Activated CD8-positive, alpha-beta T cell treated with anti-CD3 and anti-CD28 coated beads for 36 hours (primary cell): ENCODE measurements at regions of chr11 and their contacts with region 1.

Region 1: GRCh38 chr11:4187055-4187988 is 92.7 kb downstream of the RRM1 start:
- DNase-seq: peak; percentile 89
- ATAC-seq: peak; percentile 94
- H3K4me3 Mint-ChIP-seq: peak overlapping the region; percentile 66
- H3K27ac Mint-ChIP-seq: no peak overlapping the region
- H3K4me1 Mint-ChIP-seq: peaks cover 4% of the 10 kb centered on the region
- H3K27me3 Mint-ChIP-seq: peaks cover 2% of the 10 kb centered on the region
- CTCF ChIP-seq: peak; percentile 88

Region 2: GRCh38 chr11:4211991-4212390 is 24.7 kb after region 1 on chr11:
- CTCF ChIA-PET with region 1: interaction called, 17 read pairs
- POLR2A ChIA-PET with region 1: no interaction called
- intact Hi-C with region 1: no loop called
- DNase-seq: no peak
- ATAC-seq: no peak
- H3K4me3 Mint-ChIP-seq: no peak overlapping the region
- H3K27ac Mint-ChIP-seq: no peak overlapping the region
- H3K4me1 Mint-ChIP-seq: no peaks in the 10 kb centered on the region
- H3K27me3 Mint-ChIP-seq: peaks cover 20% of the 10 kb centered on the region
- CTCF ChIP-seq: no peak

Region 3: GRCh38 chr11:4496557-4497275 is 309.4 kb after region 1 on chr11:
- CTCF ChIA-PET with region 1: interaction called, 52 read pairs
- POLR2A ChIA-PET with region 1: no interaction called
- intact Hi-C with region 1: loop called (anchors 5 kb)
- DNase-seq: no peak
- ATAC-seq: no peak
- H3K4me3 Mint-ChIP-seq: no peak overlapping the region
- H3K27ac Mint-ChIP-seq: no peak overlapping the region
- H3K4me1 Mint-ChIP-seq: peaks cover 12% of the 10 kb centered on the region
- H3K27me3 Mint-ChIP-seq: peaks cover 6% of the 10 kb centered on the region
- CTCF ChIP-seq: no peak

Region 4: GRCh38 chr11:4551346-4551979 is 364.1 kb after region 1 on chr11:
- CTCF ChIA-PET with region 1: interaction called, 19 read pairs
- POLR2A ChIA-PET with region 1: no interaction called
- intact Hi-C with region 1: no loop called
- DNase-seq: peak; percentile 9
- ATAC-seq: no peak
- H3K4me3 Mint-ChIP-seq: no peak overlapping the region
- H3K27ac Mint-ChIP-seq: no peak overlapping the region
- H3K4me1 Mint-ChIP-seq: no peaks in the 10 kb centered on the region
- H3K27me3 Mint-ChIP-seq: peaks cover 7% of the 10 kb centered on the region
- CTCF ChIP-seq: peak; percentile 23